BJ (cell line): ENCODE measurements at regions of chr5 and their contacts with region 1.

Region 1: DNA sequence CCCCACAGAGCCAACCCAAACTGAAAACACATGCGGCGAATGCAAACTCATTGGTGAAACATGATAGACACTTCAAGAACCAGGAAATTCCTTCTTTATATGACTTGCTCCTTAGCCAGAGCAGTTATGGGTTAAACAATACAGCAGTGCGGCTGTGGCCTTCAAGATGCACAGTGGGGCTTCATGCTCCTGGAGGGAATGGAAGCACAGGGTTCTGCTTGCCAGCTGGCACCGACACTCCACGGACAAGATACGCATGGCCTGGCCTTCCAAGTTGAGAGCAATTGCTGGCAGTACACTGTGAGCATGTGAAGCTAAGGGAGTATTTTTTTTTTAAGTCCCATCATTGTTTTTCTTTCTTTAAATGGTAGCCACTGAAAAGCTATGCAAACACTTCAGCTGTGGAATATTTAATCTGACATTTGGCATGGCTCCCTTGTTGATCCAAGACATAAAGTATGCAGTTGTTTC is 451.6 kb upstream of the CD180 start:
- DNase-seq: peak; percentile 94
- H3K4me3 ChIP-seq: no peak overlapping the region
- H3K27me3 ChIP-seq: no peaks in the 10 kb centered on the region
- CTCF ChIP-seq: no peak

Region 2: DNA sequence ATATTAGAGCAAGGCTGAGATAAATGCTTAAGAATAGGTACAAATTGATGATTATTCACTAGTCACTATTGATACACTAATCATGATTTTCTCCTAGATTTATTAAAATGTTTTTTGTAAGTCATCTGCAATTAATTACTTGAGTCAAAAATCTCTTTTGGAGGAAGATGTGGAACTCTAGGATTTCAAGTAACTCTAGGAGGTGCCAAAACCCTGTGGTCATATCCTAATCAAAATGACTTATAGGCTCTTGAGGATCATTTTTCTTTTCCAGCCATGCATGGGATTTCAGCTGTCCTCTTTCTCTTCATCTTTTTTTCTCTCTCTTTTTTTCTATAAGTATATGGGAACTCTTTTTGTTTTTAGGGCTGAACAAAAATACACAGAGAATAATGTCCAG is 309.8 kb before region 1 on chr5:
- CTCF ChIA-PET with region 1: no interaction called
- POLR2A ChIA-PET with region 1: interaction called, 10 read pairs
- DNase-seq: no peak
- H3K4me3 ChIP-seq: no peak overlapping the region
- H3K27me3 ChIP-seq: no peaks in the 10 kb centered on the region
- CTCF ChIP-seq: no peak

Region 3: DNA sequence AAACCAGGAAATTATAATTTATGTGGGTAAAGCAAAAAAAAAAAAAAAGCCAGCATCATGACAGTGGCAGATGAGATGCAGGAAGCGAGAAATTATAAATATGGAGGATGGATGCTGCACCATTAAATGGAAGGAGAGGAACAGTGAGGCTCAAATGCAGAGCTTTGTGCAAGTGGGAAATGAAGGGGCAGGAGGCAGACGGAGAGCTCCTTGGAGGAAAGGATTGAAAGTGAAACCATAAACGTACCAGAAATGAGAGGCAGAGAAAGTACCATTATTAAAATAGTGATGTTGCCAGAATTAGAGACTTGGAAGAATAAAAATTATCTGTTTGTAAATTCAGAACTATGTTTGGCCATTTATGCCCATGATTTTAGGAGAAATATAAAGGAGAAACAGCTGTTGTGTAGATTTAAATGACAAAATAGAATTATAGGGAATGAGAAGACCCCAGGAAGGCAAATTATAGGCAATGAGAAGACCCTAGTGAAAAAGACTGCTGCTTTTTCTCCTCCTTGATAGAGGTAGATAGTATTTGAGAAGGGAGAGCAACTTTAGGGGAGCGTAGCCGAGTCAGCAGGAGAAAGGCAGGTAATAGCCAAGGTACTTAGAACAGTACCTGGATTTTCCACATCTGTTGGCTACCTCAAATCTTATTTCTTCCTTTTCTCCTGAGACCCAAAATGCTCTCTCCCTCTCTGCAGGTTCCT is 110.6 kb before region 1 on chr5:
- CTCF ChIA-PET with region 1: no interaction called
- POLR2A ChIA-PET with region 1: no interaction called
- DNase-seq: no peak
- H3K4me3 ChIP-seq: peak overlapping the region; percentile 8; the same call in 1 of the 2 replicates
- H3K27me3 ChIP-seq: no peaks in the 10 kb centered on the region
- CTCF ChIP-seq: no peak

Region 4: GRCh38 chr5:68189171-68189570 is 540.9 kb after region 1 on chr5:
- CTCF ChIA-PET with region 1: no interaction called
- POLR2A ChIA-PET with region 1: interaction called, 14 read pairs
- DNase-seq: no peak
- H3K4me3 ChIP-seq: no peak overlapping the region
- H3K27me3 ChIP-seq: no peaks in the 10 kb centered on the region
- CTCF ChIP-seq: no peak